Naive thymus-derived CD4-positive, alpha-beta T cell (primary cell): ENCODE measurements at regions of chr1 and their contacts with region 1.

Region 1: GRCh38 chr1:155091071-155091709 is 12.6 kb downstream of the EFNA3 start:
- DNase-seq: peak; percentile 57 to 86 (median 73)
- ATAC-seq: peak; percentile 89
- H3K4me3 ChIP-seq: no peak overlapping the region
- H3K4me3 Mint-ChIP-seq: no peak overlapping the region
- H3K27ac ChIP-seq: no peak overlapping the region
- H3K27ac Mint-ChIP-seq: peak overlapping the region in 1 of 9 donors; percentile 33
- H3K4me1 ChIP-seq: peaks cover 2% of the 10 kb centered on the region in 2 donors
- H3K4me1 Mint-ChIP-seq: peaks cover 0 to 12% (median 4%) of the 10 kb centered on the region in 7 donors
- H3K27me3 ChIP-seq: no peaks in the 10 kb centered on the region
- H3K27me3 Mint-ChIP-seq: peaks cover 0 to 21% (median 0%) of the 10 kb centered on the region in 5 donors

Region 2: DNA sequence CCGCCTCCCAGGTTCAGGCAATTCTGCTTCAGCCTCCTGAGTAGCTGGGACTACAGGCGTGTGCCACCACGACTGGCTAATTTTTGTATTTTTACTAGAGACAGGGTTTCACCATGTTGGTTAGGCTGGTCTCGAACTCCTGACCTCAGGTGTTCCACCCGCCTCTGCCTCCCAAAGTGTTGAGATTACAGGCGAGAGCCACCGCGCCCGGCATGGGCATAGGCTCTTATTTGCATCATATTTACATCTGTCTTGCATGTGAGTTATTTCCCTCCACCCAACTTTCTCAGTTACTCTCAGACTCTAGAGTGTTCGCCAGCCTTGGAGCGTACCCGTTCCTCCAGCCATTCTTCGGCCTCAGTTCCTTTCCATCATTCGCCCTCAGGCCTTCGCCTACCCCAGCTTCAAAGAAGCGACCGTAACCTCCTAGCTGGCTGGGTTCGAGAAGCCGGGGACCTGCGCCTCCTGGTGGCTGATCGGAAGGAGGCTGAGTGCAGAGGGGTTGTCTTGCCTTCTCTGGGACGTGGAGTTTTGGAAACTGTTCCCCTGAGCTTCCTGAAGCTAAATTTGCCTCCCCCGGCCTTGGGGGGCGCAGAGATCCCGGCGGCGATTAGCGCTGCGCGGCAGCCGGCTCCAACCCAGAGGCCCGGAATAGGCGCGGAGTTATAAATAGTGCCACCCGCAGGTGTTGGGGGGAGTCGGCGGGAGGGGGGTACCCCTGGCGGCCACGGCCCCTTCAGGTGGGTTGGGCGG is 92.2 kb before region 1 on chr1:
- CTCF ChIA-PET with region 1: no interaction called
- POLR2A ChIA-PET with region 1: no interaction called
- intact Hi-C with region 1: no loop called
- DNase-seq: peak in 8 of 9 donors; percentile 49 to 75 (median 58)
- ATAC-seq: no peak
- H3K4me3 ChIP-seq: peak overlapping the region; percentile 66
- H3K4me3 Mint-ChIP-seq: peak overlapping the region; percentile 80 to 99 (median 91)
- H3K27ac ChIP-seq: peak overlapping the region; percentile 88
- H3K27ac Mint-ChIP-seq: peak overlapping the region; percentile 83 to 97 (median 91)
- H3K4me1 ChIP-seq: peaks cover 4 to 11% of the 10 kb centered on the region in 2 donors
- H3K4me1 Mint-ChIP-seq: peaks cover 12 to 42% (median 32%) of the 10 kb centered on the region in 7 donors
- H3K27me3 ChIP-seq: no peaks in the 10 kb centered on the region
- H3K27me3 Mint-ChIP-seq: no peaks in the 10 kb centered on the region

Region 3: GRCh38 chr1:155127105-155127964 is 36.1 kb after region 1 on chr1 and contains the start of gene EFNA1:
- CTCF ChIA-PET with region 1: interaction called, 14 read pairs
- POLR2A ChIA-PET with region 1: interaction called, 5 read pairs
- intact Hi-C with region 1: loop called in 1 of 2 experiments (anchors 1 kb)
- DNase-seq: peak in 7 of 9 donors; percentile 17 to 59 (median 35)
- ATAC-seq: peak; percentile 55
- H3K4me3 ChIP-seq: peak within 1 kb of the TSS; percentile 63
- H3K4me3 Mint-ChIP-seq: peak within 1 kb of the TSS; percentile 84 to 97 (median 92)
- H3K27ac ChIP-seq: peak within 1 kb of the TSS; percentile 55
- H3K27ac Mint-ChIP-seq: peak within 1 kb of the TSS in 8 of 9 donors; percentile 74 to 96 (median 86)
- H3K4me1 ChIP-seq: peaks cover 24 to 27% of the 10 kb centered on the region in 2 donors
- H3K4me1 Mint-ChIP-seq: peaks cover 20 to 49% (median 35%) of the 10 kb centered on the region in 7 donors
- H3K27me3 ChIP-seq: peaks cover 0 to 6% of the 10 kb centered on the region in 2 donors
- H3K27me3 Mint-ChIP-seq: peaks cover 0 to 70% (median 7%) of the 10 kb centered on the region in 5 donors
- total RNA-seq, gene EFNA1: 4.0 to 7.3 (median 5.6) TPM in 4 of 5 experiments, not detected in the other

Region 4: DNA sequence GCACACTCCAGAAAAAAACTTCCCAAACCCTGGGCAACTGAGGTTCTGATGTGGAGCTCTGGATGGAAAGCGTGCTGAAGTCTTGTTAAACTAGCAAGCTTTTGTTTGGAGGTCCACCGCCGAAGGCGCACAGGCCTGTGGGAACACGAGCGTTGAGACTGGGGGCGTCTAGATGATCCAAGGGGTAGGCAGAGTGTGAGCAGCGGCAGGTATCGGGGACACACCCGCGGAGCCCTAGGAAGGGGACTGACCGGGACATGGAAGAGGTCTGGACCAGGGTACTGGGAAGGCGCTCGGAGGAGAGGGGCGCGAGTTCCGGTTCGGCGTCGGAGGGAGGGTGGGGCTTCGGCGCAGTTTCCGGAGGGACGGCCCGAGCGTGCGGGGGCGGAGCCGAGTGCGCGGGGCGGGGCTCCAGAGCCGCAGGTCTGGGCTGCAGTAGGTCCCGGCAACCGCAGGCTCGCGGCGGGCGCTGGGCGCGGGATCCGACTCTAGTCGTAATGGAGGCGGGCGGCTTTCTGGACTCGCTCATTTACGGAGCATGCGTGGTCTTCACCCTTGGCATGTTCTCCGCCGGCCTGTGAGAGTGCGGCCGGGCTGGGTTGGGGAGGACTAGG is 44.3 kb after region 1 on chr1 and contains the start of gene SLC50A1:
- CTCF ChIA-PET with region 1: interaction called, 14 read pairs
- POLR2A ChIA-PET with region 1: interaction called, 5 read pairs
- intact Hi-C with region 1: loop called in 1 of 2 experiments (anchors 1 kb)
- DNase-seq: peak; percentile 86 to 96 (median 90)
- ATAC-seq: peak; percentile 93
- H3K4me3 ChIP-seq: peak within 1 kb of the TSS; percentile 99
- H3K4me3 Mint-ChIP-seq: peak within 1 kb of the TSS; percentile 91 to 100 (median 98)
- H3K27ac ChIP-seq: peak within 1 kb of the TSS; percentile 99
- H3K27ac Mint-ChIP-seq: peak within 1 kb of the TSS; percentile 95 to 100 (median 98)
- H3K4me1 ChIP-seq: peaks cover 8 to 15% of the 10 kb centered on the region in 2 donors
- H3K4me1 Mint-ChIP-seq: peaks cover 41 to 58% (median 46%) of the 10 kb centered on the region in 7 donors
- H3K27me3 ChIP-seq: no peaks in the 10 kb centered on the region
- H3K27me3 Mint-ChIP-seq: peaks cover 0 to 2% (median 0%) of the 10 kb centered on the region in 5 donors
- total RNA-seq, gene SLC50A1: 21.1 to 35.6 (median 24.3) TPM

Region 5: GRCh38 chr1:155167166-155168104 is 76.2 kb after region 1 on chr1:
- CTCF ChIA-PET with region 1: interaction called, 88 read pairs
- POLR2A ChIA-PET with region 1: interaction called, 10 read pairs
- intact Hi-C with region 1: loop called (anchors 1 kb)
- DNase-seq: peak; percentile 69 to 83 (median 81)
- ATAC-seq: peak; percentile 85
- H3K4me3 ChIP-seq: peak overlapping the region; percentile 45
- H3K4me3 Mint-ChIP-seq: peak overlapping the region in 9 of 10 donors; percentile 22 to 76 (median 66)
- H3K27ac ChIP-seq: no peak overlapping the region
- H3K27ac Mint-ChIP-seq: peak overlapping the region in 7 of 9 donors; percentile 7 to 68 (median 42)
- H3K4me1 ChIP-seq: peaks cover 10 to 20% of the 10 kb centered on the region in 2 donors
- H3K4me1 Mint-ChIP-seq: peaks cover 18 to 35% (median 24%) of the 10 kb centered on the region in 7 donors
- H3K27me3 ChIP-seq: no peaks in the 10 kb centered on the region
- H3K27me3 Mint-ChIP-seq: peaks cover 0 to 4% (median 0%) of the 10 kb centered on the region in 5 donors

Region 6: DNA sequence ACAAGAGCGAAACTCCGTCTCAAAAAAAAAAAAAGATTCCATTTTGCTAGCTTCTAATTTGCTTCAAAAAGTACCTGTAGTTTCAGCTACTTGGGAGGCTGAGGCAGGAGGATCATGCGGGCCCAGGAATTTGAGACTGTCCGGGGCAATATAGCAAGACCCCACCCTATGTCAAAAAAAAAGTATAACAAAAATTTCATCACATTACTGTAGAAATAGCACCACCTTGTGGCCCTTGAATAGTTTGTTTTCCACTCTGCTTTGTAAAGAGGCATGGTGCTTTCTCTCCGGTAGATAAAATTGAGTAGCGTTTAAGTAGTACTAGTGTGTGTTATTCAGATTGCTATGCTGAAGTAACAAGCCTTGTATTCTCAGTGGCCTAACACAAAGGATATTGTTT is 500.6 kb after region 1 on chr1:
- CTCF ChIA-PET with region 1: no interaction called
- POLR2A ChIA-PET with region 1: no interaction called
- intact Hi-C with region 1: loop called in 1 of 2 experiments (anchors 5 kb)
- DNase-seq: peak in 7 of 9 donors; percentile 42 to 71 (median 57)
- ATAC-seq: peak; percentile 85
- H3K4me3 ChIP-seq: no peak overlapping the region
- H3K4me3 Mint-ChIP-seq: no peak overlapping the region
- H3K27ac ChIP-seq: no peak overlapping the region
- H3K27ac Mint-ChIP-seq: peak overlapping the region in 1 of 9 donors; percentile 62
- H3K4me1 ChIP-seq: no peaks in the 10 kb centered on the region
- H3K4me1 Mint-ChIP-seq: peaks cover 0 to 4% (median 3%) of the 10 kb centered on the region in 7 donors
- H3K27me3 ChIP-seq: no peaks in the 10 kb centered on the region
- H3K27me3 Mint-ChIP-seq: no peaks in the 10 kb centered on the region